ENCODE measurements at regions of chr10 and their contacts with region 1.

Region 1: DNA sequence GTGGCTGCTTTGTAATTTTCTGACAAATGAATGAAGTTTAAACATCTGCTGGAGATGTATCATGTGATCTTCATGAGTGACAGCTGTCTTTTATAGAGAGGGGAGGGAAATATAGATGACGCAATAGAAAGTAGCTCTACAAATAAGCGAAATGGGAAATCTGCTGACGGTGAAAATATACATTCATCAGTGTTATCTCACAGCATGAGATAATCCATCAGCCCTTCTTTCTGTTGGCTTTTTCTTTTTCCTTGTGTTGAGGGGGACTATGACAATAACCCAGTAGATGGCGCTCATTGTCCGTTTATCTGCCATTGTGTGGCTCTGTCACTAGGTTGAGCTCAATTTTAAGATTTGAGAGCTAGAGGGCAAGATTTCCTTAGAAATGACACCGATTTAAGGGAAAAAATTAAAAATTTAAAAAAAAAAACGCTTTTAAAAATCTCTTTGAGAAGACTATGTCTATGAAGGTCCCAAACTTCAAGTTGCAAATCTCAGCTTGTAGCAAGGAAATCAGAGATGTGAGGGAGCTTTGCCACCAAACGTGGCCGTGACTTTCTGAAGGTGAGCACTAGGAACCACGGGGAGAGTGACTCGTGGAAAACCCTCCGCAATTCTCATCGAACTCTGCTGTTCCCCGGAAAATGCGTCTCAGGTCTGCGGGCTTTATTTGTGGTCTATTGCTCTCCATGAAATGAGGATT is 114.6 kb upstream of the SFMBT2 start:
- H3K4me3 Mint-ChIP-seq: no peak overlapping the region
- H3K27ac Mint-ChIP-seq: no peak overlapping the region
- H3K4me1 Mint-ChIP-seq: no peaks in the 10 kb centered on the region
- H3K27me3 Mint-ChIP-seq: peaks cover 17% of the 10 kb centered on the region

Region 2: DNA sequence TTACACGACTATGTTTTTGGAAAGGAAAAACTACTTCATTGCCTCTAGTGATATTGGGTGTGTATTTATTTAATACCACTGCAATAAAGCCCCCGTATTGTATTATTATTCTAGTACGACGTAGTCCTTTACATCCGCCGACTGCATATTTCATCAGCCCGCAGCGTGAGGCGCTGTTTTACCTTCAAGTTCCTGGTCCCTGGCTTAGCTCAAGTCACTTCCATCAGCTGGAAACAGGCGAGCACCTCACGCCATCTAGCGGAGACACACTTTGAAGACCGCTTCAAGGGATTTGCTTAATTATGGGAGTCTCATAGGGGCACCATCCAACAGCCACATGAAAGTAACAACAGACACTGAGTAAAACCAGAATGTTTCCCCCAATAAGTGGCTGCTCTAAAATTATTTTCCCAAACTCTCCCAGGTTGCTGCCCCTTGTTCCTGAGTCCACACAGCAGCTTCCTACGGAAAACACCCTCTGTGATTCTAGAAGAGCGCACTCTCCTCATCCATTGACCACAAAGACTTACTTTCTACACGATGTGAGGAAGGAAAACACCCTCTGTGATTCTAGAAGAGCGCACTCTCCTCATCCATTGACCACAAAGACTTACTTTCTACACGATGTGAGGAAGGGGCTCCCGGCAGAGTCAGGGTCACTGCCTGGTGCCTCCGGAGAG is 161.9 kb after region 1 on chr10:
- intact Hi-C with region 1: loop called (anchors 1 kb)
- H3K4me3 Mint-ChIP-seq: no peak overlapping the region
- H3K27ac Mint-ChIP-seq: no peak overlapping the region
- H3K4me1 Mint-ChIP-seq: no peaks in the 10 kb centered on the region
- H3K27me3 Mint-ChIP-seq: peaks cover 16% of the 10 kb centered on the region

Region 3: DNA sequence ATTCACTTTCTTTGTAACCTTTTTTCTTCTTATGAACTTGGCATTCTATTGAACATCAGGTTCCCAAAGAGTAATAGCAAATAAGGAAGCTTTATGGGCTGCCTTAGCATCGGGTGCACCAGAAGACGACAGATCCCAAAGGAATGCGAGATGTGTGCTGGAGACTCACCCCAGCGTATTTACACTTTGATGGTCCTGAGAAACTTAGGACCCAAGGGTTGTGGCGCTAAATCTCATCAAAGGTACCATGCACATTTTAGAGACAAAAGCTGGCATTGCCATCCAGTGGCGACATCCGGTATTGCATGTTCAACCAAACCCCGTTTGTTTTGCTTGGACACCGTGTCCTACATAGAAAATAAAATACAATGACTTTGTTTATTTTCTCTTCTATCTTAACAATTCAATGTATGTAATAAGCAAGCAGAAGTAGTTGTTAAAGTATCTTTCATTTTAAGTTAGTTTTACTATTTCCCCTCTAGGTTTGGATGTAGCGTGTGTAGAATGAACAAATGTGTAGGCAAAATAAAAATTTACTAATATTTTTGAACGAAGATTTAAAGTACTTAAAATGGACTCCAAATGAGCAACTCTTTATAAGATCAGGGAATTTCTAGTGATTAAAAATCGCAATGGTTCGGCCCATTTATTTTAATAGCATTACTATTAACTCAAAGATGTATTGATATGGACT is 1683.8 kb after region 1 on chr10:
- intact Hi-C with region 1: loop called (anchors 5 kb)
- H3K4me3 Mint-ChIP-seq: no peak overlapping the region
- H3K27ac Mint-ChIP-seq: no peak overlapping the region
- H3K4me1 Mint-ChIP-seq: no peaks in the 10 kb centered on the region
- H3K27me3 Mint-ChIP-seq: no peaks in the 10 kb centered on the region

Measured in dendritic cell treated with granulocyte-macrophage colony-stimulating factor and Interleukin-4, amounts not matched to agents 40 ng/mL and 50 ng/mL, for 4 days (primary cell).